OCI-LY7 (cell line): ENCODE measurements at regions of chr4 and their contacts with region 1.

Region 1: DNA sequence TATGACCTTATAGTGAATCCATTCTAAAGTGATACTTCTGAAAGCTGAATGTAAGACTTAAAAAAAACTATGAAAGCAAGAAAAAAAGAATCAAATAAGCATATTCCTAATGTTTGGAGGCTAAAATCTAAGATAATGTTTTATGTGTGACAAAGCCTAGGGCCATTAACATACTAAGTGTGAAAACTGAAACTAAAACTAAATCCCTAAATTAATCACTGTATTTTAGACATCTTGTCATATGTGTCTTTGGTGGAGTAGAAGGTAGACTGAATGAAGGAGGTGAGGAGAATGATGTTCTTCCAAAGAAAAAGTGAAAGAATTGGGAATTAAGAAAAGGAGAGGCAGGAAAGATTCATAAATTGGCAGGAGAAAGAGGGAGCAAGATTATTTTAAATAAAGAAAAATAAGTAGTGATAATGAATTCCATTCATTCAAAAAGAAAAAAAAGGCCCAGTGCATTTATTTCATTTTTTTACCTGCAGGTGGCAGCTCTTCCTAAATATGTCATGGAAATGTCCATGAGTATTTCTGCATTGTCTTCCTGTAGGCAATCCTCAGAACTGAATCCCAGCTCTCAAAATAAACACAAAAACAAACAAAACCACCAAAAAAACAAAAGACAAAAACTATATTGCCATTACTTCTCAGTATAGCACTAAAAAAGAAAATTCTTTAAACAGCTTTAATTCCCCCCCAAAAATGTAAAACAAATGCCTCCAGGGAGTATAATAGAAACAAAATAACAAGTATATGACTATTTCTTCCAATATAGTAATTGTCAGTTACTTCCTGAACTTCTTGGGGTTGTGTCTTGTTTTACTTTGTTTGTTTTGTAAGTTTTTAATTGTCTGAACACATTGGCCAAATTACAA is 17.0 kb upstream of the AP1AR start:
- DNase-seq: peak; percentile 51
- H3K4me3 ChIP-seq: no peak overlapping the region
- H3K27ac ChIP-seq: no peak overlapping the region
- H3K4me1 ChIP-seq: peaks cover 4% of the 10 kb centered on the region
- CTCF ChIP-seq: peak; percentile 84

Region 2: GRCh38 chr4:112266821-112267220 is 52.2 kb after region 1 on chr4:
- CTCF ChIA-PET with region 1: no interaction called
- POLR2A ChIA-PET with region 1: no interaction called
- intact Hi-C with region 1: loop called (anchors 5 kb)
- DNase-seq: peak; percentile 45
- H3K4me3 ChIP-seq: no peak overlapping the region
- H3K27ac ChIP-seq: no peak overlapping the region
- H3K4me1 ChIP-seq: no peaks in the 10 kb centered on the region
- CTCF ChIP-seq: peak; percentile 81

Region 3: GRCh38 chr4:112296949-112297880 is 82.6 kb after region 1 on chr4 and contains the start of gene ALPK1:
- CTCF ChIA-PET with region 1: no interaction called
- POLR2A ChIA-PET with region 1: no interaction called
- intact Hi-C with region 1: no loop called
- DNase-seq: peak; percentile 81
- H3K4me3 ChIP-seq: peak within 1 kb of the TSS; percentile 71
- H3K27ac ChIP-seq: peak within 1 kb of the TSS; percentile 62
- H3K4me1 ChIP-seq: peaks cover 33% of the 10 kb centered on the region
- CTCF ChIP-seq: no peak
- total RNA-seq, gene ALPK1: 22.5 and 33.7 TPM in 2 replicates